ENCODE measurements at regions of chr17 and their contacts with region 1.

Region 1: DNA sequence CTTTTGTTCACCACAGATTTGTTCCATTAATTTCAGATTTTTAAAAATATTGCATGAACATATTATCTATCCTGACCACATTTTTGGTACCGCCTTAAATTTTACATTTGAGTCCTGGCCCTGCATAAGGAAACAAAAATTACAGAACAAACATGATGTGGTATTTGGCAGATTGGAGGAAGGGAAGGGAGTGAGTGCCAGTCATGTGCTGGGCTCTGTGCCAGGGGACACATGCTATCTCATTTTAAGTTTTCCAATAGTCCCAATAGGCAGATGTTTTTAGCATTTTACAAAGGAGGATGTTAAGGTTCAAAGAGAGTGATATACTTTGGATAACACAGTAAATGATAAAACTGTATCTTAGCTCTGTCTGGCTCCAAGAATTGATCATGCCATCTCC is 185.1 kb downstream of the CDK5R1 start:
- DNase-seq: no peak
- H3K4me3 Mint-ChIP-seq: no peak overlapping the region
- H3K27ac Mint-ChIP-seq: no peak overlapping the region
- H3K4me1 Mint-ChIP-seq: no peaks in the 10 kb centered on the region
- H3K27me3 Mint-ChIP-seq: no peaks in the 10 kb centered on the region

Region 2: GRCh38 chr17:32609085-32609484 is 62.8 kb before region 1 on chr17:
- CTCF ChIA-PET with region 1: no interaction called
- POLR2A ChIA-PET with region 1: no interaction called
- intact Hi-C with region 1: no loop called
- DNase-seq: peak; percentile 83
- H3K4me3 Mint-ChIP-seq: no peak overlapping the region
- H3K27ac Mint-ChIP-seq: no peak overlapping the region
- H3K4me1 Mint-ChIP-seq: peaks cover 7% of the 10 kb centered on the region
- H3K27me3 Mint-ChIP-seq: no peaks in the 10 kb centered on the region

Region 3: DNA sequence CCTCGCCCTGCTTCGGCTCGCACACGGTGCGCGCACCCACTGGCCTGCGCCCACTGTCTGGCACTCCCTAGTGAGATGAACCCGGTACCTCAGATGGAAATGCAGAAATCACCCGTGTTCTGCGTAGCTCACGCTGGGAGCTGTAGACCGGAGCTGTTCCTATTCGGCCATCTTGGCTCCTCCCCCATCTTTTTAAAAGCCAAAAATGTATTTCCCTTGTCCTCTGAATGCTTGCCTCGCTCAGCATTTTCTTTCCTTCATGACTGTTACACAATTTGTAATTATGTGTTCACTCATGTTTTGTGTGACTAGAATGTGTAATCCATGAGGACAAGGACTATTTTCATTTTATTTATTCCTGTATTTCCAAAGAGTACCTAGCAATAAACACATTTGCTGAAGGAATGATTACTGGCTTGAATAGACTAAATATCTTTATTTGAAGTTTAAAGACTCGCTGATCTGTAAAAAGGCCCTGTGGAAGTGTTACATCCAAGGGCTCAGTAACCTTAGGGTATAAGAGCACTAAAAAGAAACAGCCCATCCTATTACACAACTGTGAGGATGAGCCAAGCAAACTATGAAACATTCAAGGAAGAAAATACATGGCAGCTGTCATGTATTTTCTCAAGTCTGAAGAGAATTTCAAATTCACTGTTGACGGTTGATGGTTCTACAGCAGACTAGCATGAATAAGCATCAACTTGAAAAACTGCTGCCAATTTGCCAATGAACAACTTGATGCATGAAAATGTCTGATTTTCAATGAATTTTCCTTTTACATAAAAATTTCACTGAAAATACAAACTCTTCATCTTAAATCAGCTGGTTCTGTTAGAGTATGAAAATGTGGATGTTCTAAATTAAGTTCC is 12.4 kb after region 1 on chr17:
- CTCF ChIA-PET with region 1: no interaction called
- POLR2A ChIA-PET with region 1: no interaction called
- intact Hi-C with region 1: no loop called
- DNase-seq: no peak
- H3K4me3 Mint-ChIP-seq: no peak overlapping the region
- H3K27ac Mint-ChIP-seq: no peak overlapping the region
- H3K4me1 Mint-ChIP-seq: no peaks in the 10 kb centered on the region
- H3K27me3 Mint-ChIP-seq: no peaks in the 10 kb centered on the region

Region 4: GRCh38 chr17:32755045-32755805 is 83.3 kb after region 1 on chr17:
- CTCF ChIA-PET with region 1: no interaction called
- POLR2A ChIA-PET with region 1: no interaction called
- intact Hi-C with region 1: loop called (anchors 1 kb)
- DNase-seq: no peak
- H3K4me3 Mint-ChIP-seq: no peak overlapping the region
- H3K27ac Mint-ChIP-seq: no peak overlapping the region
- H3K4me1 Mint-ChIP-seq: peaks cover 15% of the 10 kb centered on the region
- H3K27me3 Mint-ChIP-seq: no peaks in the 10 kb centered on the region

Region 5: DNA sequence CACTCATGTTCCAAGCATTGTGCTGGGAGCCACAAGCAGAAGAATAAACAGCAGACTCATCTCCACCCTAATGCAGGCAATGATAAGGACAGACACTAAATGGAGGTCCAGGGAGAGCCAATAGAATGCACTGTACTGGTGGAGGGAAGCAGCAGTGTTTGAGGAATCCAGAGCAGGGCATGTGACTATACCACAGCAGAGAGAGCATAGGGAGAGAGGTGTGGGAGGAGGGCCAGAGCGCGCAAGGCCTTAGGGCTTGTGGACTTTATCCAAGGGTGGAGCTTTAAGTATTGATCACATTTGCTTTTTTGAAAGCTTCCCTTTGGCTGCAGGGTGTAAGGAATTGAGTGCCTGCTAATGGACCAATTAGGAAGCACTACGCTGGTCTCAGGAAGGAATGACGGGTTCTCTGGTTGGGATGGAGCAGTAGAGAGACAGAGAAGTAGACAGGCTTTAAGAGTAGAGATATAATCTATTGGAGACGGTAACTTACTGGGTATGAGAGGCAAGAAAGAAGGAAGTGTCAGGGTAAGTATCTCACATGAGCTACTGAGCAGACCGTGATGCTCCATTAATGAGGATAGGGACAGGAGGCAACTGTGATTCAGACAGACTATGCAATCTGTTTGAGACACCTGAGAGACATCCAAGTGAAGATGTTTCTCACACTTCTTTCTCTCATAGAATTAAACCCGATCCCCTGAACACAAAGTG is 122.8 kb after region 1 on chr17:
- CTCF ChIA-PET with region 1: no interaction called
- POLR2A ChIA-PET with region 1: no interaction called
- intact Hi-C with region 1: no loop called
- DNase-seq: no peak
- H3K4me3 Mint-ChIP-seq: no peak overlapping the region
- H3K27ac Mint-ChIP-seq: no peak overlapping the region
- H3K4me1 Mint-ChIP-seq: no peaks in the 10 kb centered on the region
- H3K27me3 Mint-ChIP-seq: peaks cover 3% of the 10 kb centered on the region